ENCODE measurements at regions of chr2 and their contacts with region 1.

Region 1: DNA sequence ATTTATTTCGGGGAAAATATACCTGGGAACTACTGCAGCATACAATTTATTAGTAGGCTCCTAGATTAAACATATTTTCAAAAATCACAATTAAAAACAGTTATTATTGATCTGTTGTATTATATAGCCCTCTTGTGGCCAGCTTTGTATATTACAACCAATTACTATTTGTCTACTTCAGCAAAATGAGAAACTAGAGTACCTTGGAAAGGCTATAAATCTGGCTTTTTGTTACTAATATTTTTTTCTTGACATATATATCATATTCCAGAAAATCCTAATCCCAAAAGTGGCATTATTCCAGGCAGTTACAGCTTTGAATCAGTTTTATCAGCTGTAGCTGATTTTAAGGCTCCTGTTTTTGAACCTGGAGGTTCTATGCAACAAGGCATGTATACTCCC is 101.2 kb downstream of the UBR3 start:
- DNase-seq: no peak
- ATAC-seq: no peak
- H3K4me3 ChIP-seq: no peak overlapping the region
- H3K27ac ChIP-seq: no peak overlapping the region
- H3K4me1 ChIP-seq: peaks cover 5% of the 10 kb centered on the region
- H3K27me3 ChIP-seq: no peaks in the 10 kb centered on the region
- CTCF ChIP-seq: peak; percentile 35 to 83 (median 69)
- POLR2A ChIP-seq: no peak

Region 2: DNA sequence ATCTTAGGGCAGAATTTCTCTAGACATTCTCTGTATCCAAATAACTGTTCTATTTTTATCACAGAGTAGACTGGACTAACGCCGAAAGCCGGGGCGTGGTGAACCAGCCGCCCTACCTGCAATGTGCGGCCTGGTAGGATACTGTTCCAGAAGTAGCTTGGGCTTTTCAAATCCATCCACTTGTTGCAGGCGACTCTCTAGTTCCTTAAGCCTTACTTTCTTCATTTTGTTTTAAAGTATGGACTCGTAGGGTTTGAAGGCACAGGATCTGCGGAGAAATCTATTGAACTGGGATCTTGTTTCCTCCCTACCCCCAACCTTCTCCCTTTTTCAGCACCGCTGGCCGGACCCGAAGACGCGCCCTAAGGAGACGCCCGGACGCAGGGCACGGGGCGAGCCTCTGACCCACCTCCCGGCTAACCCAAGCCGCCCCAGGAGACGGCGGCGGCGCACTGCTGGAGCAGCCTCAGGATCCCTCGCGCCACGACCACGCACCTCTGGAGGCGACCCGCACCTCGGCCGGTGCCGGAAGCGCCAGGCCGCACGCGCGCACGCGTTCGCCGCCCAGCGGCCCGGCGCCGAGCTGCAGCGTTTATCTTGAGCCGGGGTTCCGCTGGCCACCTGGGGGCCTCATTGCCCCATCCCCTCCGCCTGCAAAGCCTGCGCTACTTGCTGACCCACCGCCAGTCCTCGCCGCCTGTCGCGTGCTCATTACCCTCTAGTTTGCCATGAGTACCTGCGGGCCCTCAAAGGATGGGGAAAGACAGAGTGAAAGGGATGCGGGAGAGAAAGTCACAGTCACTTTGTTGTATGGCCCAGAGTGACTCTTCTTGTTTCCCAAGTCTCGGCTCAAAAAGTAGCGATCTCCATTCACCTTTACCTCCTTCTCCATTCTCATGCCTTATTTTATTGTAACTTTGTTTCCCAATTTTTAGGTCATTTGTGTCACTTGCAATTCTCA is 103.8 kb before region 1 on chr2 and contains the start of gene METTL5:
- intact Hi-C with region 1: loop called (anchors 10 kb)
- DNase-seq: peak; percentile 78 to 86 (median 80)
- ATAC-seq: peak; percentile 72
- H3K4me3 ChIP-seq: peak within 1 kb of the TSS; percentile 28 to 85
- H3K27ac ChIP-seq: peak within 1 kb of the TSS; percentile 61 to 82 (median 74)
- H3K4me1 ChIP-seq: peaks cover 39% of the 10 kb centered on the region
- H3K27me3 ChIP-seq: no peaks in the 10 kb centered on the region
- CTCF ChIP-seq: peak; percentile 80 to 99 (median 92)
- POLR2A ChIP-seq: peak; percentile 61 to 76 (median 72)
- total RNA-seq, gene METTL5: 12.5 to 28.3 TPM